ENCODE measurements at regions of chr18 and their contacts with region 1.

Region 1: DNA sequence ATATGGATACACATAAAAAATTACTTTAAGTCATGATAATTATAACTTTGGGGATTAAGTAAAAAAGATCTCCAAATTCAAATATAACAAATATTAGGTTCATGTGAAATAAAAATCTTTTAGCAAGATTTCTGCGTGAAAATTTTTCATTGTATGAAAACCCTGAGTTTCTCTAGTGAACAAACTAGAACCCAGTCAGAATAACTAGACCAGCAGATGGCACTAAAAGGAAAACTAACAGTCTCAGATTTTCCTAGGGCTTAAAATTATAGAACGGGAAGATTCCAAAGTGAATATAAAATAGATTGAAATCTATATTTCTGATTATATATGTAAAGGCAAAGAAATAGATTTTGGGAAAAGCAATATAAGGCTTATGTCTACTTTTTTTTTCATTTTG is 43.3 kb downstream of the TMEM200C start:
- DNase-seq: no peak
- ATAC-seq: no peak
- H3K4me3 ChIP-seq: no peak overlapping the region
- H3K4me1 ChIP-seq: no peaks in the 10 kb centered on the region
- CTCF ChIP-seq: no peak

Region 2: DNA sequence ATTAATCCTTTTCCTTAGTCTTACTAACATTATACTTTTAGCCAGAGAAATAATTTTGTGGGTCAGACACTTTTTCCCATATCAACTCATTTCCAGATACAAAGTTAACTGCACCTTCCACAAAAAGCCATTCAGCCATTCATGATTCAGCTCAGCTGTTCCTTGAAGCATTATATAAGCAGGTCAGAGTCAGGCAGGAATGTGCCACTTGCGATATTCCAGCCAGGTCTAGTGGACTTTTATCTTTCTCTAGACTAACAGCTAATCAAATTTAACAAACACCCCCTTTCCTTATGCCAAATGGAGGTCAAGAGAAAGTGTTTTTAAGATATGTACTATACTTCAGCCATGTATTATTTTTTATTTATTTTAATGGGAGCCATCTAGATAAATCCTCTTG is 232.6 kb before region 1 on chr18:
- intact Hi-C with region 1: loop called in 1 of 2 experiments (anchors 10 kb)
- DNase-seq: no peak
- ATAC-seq: no peak
- H3K4me3 ChIP-seq: no peak overlapping the region
- H3K4me1 ChIP-seq: no peaks in the 10 kb centered on the region
- CTCF ChIP-seq: no peak

Region 3: DNA sequence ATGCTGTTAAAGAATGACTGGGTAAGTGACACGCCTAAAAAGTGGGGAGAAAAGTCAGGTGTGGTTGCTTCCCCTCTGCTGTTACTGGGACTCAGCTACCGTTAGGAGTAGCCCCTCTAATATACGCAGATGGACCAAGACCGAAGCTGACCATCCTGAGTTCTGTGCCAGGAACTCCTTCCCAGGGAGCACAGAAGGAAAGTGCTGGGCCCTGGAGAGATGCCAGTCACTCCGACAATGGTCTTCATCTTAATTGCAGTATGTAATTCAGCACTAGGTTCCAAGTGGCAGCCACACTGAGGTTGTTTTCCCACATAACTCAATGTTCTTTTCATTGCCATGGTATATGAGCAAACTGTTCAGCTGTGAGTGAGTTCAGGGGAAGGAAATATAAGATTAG is 63.0 kb after region 1 on chr18:
- intact Hi-C with region 1: no loop called
- DNase-seq: no peak
- ATAC-seq: no peak
- H3K4me3 ChIP-seq: no peak overlapping the region
- H3K4me1 ChIP-seq: no peaks in the 10 kb centered on the region
- CTCF ChIP-seq: no peak

Measured in mucosa of descending colon (tissue), 3 donors.